ENCODE measurements at regions of chr5 and their contacts with region 1.

Region 1: DNA sequence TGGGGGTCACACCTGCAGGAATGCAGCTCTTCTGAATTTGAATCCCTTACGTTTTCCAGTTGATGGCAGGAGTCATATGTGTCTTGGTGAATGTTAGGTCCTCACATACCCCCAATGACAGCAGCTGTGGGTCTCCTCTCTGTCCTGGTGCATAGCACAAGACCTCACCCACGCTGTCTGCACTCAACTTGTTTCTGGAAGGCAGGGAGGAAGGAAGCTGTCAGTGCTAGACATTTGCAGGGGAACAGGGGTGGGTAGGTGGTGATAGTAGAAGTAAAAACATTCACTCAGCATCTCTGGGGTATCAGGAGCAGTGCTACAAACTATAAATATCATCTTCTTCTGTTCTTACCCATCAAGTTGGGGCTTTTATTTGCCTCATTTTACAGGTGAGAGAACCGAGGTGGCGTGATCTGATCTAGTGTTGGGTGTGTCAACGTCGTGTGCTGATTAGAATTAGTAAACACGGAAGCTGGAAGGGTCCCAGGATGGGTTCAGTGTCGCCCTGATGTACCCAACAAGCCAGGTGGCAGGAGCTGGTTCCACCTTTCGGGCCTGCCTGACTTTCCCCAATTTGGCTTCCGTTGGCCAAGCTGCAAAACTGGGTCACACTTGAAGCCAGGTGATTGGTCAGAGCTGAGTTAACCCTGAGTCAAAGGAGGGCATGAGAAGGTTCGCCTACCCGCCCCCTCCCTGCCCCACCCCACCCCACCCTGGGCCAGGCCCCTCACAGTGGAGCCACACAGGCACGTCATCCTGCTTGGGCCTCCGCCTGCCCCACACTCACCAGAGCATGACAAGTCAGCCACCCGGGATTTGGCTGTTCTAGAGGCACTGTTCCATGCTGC is 15.8 kb downstream of the ERGIC1 start:
- DNase-seq: peak; percentile 94 to 95
- H3K4me3 ChIP-seq: no peak overlapping the region
- H3K27ac ChIP-seq: peak overlapping the region; percentile 95 to 98 (median 97)
- H3K4me1 ChIP-seq: peaks cover 67 to 89% of the 10 kb centered on the region in 2 donors
- H3K27me3 ChIP-seq: no peaks in the 10 kb centered on the region
- CTCF ChIP-seq: no peak
- POLR2A ChIP-seq: no peak

Region 2: DNA sequence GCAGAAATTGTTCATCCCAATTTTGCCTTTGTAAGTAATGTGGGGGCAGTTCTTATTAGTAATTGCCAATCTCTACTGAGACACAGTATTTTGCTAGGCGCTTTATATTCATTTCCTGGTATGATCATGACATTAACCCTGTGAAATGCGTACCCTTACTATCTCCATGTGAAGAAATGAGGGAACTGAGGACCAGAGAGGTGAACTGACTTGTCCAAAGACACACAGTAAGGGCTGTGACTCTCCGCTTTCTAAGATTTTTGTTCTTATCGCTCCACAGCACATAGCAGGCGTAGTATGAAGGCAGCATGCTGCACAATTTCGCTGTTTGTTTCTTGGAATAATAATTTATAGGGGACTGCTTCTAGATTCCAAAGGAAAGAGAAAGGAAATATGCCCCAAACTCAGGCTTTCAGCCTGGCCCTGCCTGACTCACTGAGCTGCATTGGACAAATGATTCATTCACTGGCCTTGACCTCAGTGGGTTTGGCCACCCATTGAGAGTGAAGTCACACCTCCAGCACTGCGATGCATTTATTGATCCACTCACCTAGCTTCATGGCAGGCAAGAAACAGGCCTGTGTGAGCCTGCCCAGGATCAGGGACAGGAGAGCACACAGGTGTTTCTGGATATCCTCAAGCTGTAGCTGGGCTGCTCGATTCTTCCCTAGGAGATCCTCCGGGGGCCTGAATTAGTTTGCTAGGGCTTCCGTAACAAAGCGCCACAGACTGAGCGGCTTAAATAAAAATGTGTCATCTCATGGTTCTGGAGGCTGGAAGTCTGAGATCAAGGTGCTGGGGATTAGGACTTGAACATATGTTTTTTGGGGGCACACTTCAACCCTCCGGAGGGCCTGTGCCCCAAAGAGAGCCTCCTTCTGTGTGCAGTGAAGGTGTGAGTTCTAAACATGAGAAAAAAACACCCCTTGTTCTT is 71.7 kb before region 1 on chr5:
- intact Hi-C with region 1: loop called (anchors 5 kb)
- DNase-seq: no peak
- H3K4me3 ChIP-seq: no peak overlapping the region
- H3K27ac ChIP-seq: peak overlapping the region; percentile 59 to 70 (median 70)
- H3K4me1 ChIP-seq: peaks cover 0 to 31% of the 10 kb centered on the region in 2 donors
- H3K27me3 ChIP-seq: no peaks in the 10 kb centered on the region
- CTCF ChIP-seq: no peak
- POLR2A ChIP-seq: no peak

Region 3: DNA sequence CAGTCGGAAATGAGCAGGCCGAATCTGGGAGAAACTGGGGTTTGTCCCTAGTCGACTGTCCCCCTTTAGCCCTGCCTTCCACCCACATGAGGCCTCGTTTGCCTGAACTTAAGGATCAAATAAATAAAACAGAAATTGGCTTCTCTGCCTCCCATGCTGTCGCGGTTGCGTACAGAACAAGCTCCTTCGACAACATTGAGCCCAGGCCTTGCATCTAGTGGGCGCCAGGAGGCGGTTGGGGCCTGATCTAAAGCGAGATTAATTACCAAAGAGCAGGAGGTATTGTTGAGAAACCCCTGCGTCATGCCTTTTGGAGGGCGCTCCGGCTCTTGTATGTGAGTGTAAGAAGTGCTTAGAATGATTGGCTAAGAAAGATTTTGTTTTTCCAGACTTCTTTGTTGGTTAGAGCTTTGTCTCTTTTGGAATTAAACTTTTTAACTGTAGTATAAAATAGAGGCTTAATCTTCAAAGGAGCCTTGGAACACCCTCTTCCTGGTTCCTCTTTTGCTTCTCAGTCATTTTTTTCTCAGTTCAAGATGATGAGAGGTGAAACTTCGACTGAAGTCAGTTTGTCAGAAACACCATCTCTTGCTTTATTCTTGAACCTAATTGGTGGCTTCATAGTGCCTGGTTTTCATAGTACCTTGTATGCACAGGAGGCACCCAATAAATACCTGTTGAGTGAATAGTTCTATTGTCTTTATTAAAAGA is 134.6 kb after region 1 on chr5:
- intact Hi-C with region 1: no loop called
- DNase-seq: peak; percentile 88 to 90
- H3K4me3 ChIP-seq: peak overlapping the region; percentile 77 to 87 (median 82)
- H3K27ac ChIP-seq: peak overlapping the region; percentile 93 to 95 (median 94)
- H3K4me1 ChIP-seq: peaks cover 9 to 10% of the 10 kb centered on the region in 2 donors
- H3K27me3 ChIP-seq: no peaks in the 10 kb centered on the region
- CTCF ChIP-seq: peak in 4 of 6 experiments; percentile 59 to 67 (median 60)
- POLR2A ChIP-seq: peak in 1 of 2 donors; percentile 37